Activated CD8-positive, alpha-beta T cell treated with anti-CD3 and anti-CD28 coated beads for 36 hours (primary cell): ENCODE measurements at regions of chr6 and their contacts with region 1.

Region 1: DNA sequence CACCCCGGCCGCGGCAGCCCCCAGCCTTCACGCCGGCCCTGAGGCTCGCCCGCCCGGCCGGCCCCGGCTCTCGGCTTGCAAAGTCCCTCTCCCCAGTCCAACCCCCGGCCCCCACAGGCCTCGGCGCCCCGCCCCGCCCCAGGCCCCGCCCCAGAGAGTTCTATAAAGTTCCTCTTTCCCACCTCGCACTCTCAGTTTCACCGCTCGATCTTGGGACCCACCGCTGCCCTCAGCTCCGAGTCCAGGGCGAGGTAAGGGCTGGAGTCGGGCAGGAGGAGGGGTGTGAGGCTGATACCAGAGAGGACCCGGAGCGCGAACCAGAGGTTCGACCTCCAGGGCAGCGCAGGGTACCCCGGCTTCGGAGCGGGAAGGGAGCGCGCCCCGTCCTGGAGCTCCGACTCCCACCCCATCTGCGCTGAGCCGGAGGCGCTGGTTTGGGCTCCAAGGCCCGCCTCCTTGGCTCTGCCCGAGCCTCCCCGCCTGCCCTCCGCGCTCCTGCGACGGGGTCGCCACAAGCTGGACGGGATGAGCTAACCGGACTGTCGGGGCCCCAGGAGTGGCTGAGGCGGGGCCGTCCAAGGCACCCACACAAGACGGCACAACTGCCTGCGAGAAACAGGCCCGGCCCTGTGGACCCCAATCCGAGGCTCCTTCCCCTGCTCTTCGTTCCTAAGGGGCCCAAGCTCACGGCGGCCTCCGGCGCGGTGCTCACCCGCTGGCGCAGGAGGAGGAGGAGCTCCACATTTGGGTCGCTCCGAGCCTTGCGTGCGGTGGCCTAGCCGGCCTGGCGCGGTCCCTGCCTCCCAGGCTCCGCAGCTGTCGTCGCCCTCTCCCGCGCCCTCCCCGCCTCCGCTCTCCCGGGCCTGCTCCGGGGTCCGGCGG is at the start of gene IRF4:
- DNase-seq: peak; percentile 75
- ATAC-seq: peak; percentile 51
- H3K4me3 Mint-ChIP-seq: peak within 1 kb of the TSS; percentile 99
- H3K27ac Mint-ChIP-seq: peak within 1 kb of the TSS; percentile 97
- H3K4me1 Mint-ChIP-seq: peaks cover 52% of the 10 kb centered on the region
- H3K27me3 Mint-ChIP-seq: peaks cover 4% of the 10 kb centered on the region
- CTCF ChIP-seq: no peak
- total RNA-seq, gene IRF4: 409 to 439 TPM

Region 2: DNA sequence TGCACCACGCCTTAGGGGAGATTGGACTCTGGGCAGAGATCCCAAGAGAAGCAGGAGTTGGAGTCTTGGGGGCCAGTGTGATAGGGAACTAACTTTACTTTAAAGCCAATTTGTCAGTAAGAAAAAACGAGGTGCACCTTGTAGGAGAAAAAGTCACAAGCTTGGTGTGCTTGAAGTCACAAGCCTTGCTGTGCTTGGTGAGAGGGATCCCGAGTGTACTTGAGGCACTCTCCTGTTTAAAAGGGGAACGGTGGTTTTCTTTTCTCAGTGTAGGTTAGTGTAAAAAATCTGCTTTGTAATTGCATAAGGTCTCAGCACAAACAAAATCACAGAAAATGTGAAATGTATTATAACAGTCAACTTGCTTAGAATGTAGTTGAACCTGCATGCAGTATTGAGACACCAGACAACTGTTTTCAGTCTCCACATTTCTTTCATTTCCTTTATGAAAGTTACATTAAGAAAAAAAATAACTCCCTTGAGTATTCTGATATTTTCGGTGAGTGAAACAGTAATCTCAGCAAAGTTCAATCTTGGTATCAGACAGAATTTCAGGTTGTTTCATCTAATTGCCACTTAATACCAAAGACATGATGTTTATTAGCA is 210.6 kb before region 1 on chr6:
- CTCF ChIA-PET with region 1: interaction called, 3 read pairs
- POLR2A ChIA-PET with region 1: interaction called, 12 read pairs
- intact Hi-C with region 1: loop called (anchors 5 kb)
- DNase-seq: no peak
- ATAC-seq: no peak
- H3K4me3 Mint-ChIP-seq: peak overlapping the region; percentile 58
- H3K27ac Mint-ChIP-seq: no peak overlapping the region
- H3K4me1 Mint-ChIP-seq: peaks cover 29% of the 10 kb centered on the region
- H3K27me3 Mint-ChIP-seq: peaks cover 8% of the 10 kb centered on the region
- CTCF ChIP-seq: no peak

Region 3: GRCh38 chr6:217048-217659 is 174.6 kb before region 1 on chr6:
- CTCF ChIA-PET with region 1: interaction called, 7 read pairs
- POLR2A ChIA-PET with region 1: interaction called, 53 read pairs
- intact Hi-C with region 1: no loop called
- DNase-seq: peak; percentile 48
- ATAC-seq: no peak
- H3K4me3 Mint-ChIP-seq: no peak overlapping the region
- H3K27ac Mint-ChIP-seq: no peak overlapping the region
- H3K4me1 Mint-ChIP-seq: peaks cover 48% of the 10 kb centered on the region
- H3K27me3 Mint-ChIP-seq: no peaks in the 10 kb centered on the region
- CTCF ChIP-seq: peak; percentile 59

Region 4: GRCh38 chr6:291697-292505 is 99.9 kb before region 1 on chr6 and contains the start of gene DUSP22:
- CTCF ChIA-PET with region 1: interaction called, 3 read pairs
- POLR2A ChIA-PET with region 1: interaction called, 21 read pairs
- intact Hi-C with region 1: loop called (anchors 5 kb)
- DNase-seq: peak; percentile 92
- ATAC-seq: peak; percentile 71
- H3K4me3 Mint-ChIP-seq: peak within 1 kb of the TSS; percentile 95
- H3K27ac Mint-ChIP-seq: peak within 1 kb of the TSS; percentile 97
- H3K4me1 Mint-ChIP-seq: peaks cover 58% of the 10 kb centered on the region
- H3K27me3 Mint-ChIP-seq: no peaks in the 10 kb centered on the region
- CTCF ChIP-seq: no peak
- total RNA-seq, gene DUSP22: 32.5 to 34.2 TPM

Region 5: DNA sequence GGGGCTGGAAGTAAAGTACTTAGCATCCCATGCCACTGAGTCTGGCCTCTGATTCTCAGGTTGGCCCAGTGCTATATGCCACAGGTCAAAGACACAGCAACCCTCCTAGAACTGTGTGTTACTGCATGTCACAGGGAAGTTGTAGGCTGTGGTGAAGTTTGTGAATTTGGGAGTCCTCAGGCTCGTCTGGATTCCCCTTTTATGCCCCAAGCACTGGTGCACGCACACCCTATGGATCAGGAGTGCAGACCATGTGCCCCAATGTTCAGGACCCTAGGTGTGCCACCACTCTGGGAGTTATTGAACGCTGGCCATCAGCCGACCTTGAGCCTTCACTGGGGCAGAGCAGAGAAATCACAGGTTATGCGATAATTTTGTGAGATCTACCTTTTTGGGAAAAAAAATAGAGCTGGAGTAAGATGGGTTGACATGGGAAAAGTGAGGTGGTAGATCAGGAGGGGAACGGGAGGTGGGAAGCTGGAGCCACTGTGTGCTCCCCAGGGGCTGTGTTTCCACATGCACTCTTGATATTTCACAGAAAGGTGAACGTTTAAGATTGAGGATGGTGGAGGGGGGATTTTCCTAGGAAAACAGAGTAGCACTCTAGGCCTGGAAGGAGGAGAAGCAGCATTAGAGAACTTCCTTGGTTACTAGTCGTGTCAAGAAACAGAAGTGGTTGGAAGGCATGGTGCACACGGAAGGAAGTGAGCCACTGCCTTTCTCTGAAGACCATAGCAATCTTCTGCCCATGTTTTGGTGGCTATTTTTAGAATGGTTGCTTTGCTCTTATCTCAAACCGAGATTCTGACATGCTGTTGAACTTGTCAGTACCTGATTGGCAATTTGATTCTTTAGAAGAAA is 55.4 kb before region 1 on chr6:
- CTCF ChIA-PET with region 1: interaction called, 4 read pairs
- POLR2A ChIA-PET with region 1: interaction called, 61 read pairs
- intact Hi-C with region 1: loop called (anchors 5 kb)
- DNase-seq: peak; percentile 28
- ATAC-seq: peak; percentile 8
- H3K4me3 Mint-ChIP-seq: peak overlapping the region; percentile 9
- H3K27ac Mint-ChIP-seq: peak overlapping the region; percentile 90
- H3K4me1 Mint-ChIP-seq: peaks cover 58% of the 10 kb centered on the region
- H3K27me3 Mint-ChIP-seq: no peaks in the 10 kb centered on the region
- CTCF ChIP-seq: no peak

Region 6: GRCh38 chr6:506508-506907 is 114.7 kb after region 1 on chr6:
- CTCF ChIA-PET with region 1: no interaction called
- POLR2A ChIA-PET with region 1: interaction called, 18 read pairs
- intact Hi-C with region 1: no loop called
- DNase-seq: peak; percentile 86
- ATAC-seq: peak; percentile 69
- H3K4me3 Mint-ChIP-seq: peak overlapping the region; percentile 50
- H3K27ac Mint-ChIP-seq: peak overlapping the region; percentile 99
- H3K4me1 Mint-ChIP-seq: peaks cover 97% of the 10 kb centered on the region
- H3K27me3 Mint-ChIP-seq: no peaks in the 10 kb centered on the region
- CTCF ChIP-seq: no peak

Region 7: GRCh38 chr6:558089-558488 is 166.3 kb after region 1 on chr6:
- CTCF ChIA-PET with region 1: interaction called, 16 read pairs
- POLR2A ChIA-PET with region 1: interaction called, 17 read pairs
- intact Hi-C with region 1: no loop called
- DNase-seq: no peak
- ATAC-seq: no peak
- H3K4me3 Mint-ChIP-seq: no peak overlapping the region
- H3K27ac Mint-ChIP-seq: peak overlapping the region; percentile 83
- H3K4me1 Mint-ChIP-seq: peaks cover 47% of the 10 kb centered on the region
- H3K27me3 Mint-ChIP-seq: no peaks in the 10 kb centered on the region
- CTCF ChIP-seq: peak; percentile 59

Region 8: GRCh38 chr6:835476-836160 is 443.8 kb after region 1 on chr6:
- CTCF ChIA-PET with region 1: no interaction called
- POLR2A ChIA-PET with region 1: no interaction called
- intact Hi-C with region 1: no loop called
- DNase-seq: no peak
- ATAC-seq: no peak
- H3K4me3 Mint-ChIP-seq: no peak overlapping the region
- H3K27ac Mint-ChIP-seq: no peak overlapping the region
- H3K4me1 Mint-ChIP-seq: peaks cover 4% of the 10 kb centered on the region
- H3K27me3 Mint-ChIP-seq: peaks cover 17% of the 10 kb centered on the region
- CTCF ChIP-seq: no peak